H1 (cell line): ENCODE measurements at regions of chr17 and their contacts with region 1.

Region 1: DNA sequence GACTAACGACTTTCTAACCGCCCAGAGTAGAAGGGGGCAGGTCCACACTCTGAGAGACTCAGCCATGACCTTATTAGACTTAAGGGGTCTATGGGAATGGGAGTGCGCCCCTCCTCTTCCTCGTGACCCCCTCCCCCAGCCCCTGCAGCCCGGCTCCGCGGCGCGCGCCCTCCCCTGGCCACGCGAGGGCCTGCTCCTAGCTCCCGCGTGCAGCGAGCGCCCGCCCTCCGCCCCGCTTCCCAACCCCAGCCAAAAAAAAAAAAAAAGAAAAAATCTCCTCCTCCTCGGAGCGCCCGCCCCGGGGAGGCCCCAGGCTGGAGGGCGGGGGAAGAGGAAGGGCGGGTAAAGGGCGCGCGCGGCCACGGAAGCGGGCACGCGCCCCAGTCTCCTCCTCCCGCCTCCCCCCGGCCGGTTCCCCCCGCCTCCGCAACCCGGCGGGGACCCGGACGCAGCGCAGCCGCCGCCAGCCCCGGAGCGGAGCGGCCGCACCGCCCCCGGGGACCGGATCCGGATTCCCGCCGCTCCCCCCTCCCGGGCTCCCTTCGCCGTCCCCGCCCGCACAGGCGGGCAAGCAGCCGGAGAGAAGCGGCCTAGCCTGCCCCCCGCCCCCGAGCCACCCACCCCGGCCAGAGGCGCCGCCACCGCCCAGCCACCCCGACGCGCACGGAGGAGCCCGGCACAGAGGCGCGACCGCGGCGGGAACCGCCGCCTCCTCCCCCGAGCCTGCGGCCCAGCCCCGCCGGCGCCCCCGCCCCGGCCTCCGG is 949 bp downstream of the UBTF start:
- DNase-seq: peak in 1 of 2 experiments; percentile 83
- H3K4me3 ChIP-seq: peak overlapping the region; percentile 67 to 100 (median 84)
- H3K27ac ChIP-seq: peak overlapping the region; percentile 76; the same call in 1 of the 2 replicates
- H3K4me1 ChIP-seq: peaks cover 4 to 21% (median 5%) of the 10 kb centered on the region in 4 experiments; a peak in 6 of 7 replicates
- H3K27me3 ChIP-seq: no peaks in the 10 kb centered on the region
- CTCF ChIP-seq: peak; percentile 18 to 62 (median 57)
- EP300 ChIP-seq: 0 out of 3 replicates have a peak, but pooled peaks of 1 of the 2 experiments have one; percentile 19
- POLR2A ChIP-seq: peak; percentile 16 to 38; a peak in 2 of 3 replicates
- RAD21 ChIP-seq: peak; percentile 8 to 39; a peak in 3 of 4 replicates

Region 2: DNA sequence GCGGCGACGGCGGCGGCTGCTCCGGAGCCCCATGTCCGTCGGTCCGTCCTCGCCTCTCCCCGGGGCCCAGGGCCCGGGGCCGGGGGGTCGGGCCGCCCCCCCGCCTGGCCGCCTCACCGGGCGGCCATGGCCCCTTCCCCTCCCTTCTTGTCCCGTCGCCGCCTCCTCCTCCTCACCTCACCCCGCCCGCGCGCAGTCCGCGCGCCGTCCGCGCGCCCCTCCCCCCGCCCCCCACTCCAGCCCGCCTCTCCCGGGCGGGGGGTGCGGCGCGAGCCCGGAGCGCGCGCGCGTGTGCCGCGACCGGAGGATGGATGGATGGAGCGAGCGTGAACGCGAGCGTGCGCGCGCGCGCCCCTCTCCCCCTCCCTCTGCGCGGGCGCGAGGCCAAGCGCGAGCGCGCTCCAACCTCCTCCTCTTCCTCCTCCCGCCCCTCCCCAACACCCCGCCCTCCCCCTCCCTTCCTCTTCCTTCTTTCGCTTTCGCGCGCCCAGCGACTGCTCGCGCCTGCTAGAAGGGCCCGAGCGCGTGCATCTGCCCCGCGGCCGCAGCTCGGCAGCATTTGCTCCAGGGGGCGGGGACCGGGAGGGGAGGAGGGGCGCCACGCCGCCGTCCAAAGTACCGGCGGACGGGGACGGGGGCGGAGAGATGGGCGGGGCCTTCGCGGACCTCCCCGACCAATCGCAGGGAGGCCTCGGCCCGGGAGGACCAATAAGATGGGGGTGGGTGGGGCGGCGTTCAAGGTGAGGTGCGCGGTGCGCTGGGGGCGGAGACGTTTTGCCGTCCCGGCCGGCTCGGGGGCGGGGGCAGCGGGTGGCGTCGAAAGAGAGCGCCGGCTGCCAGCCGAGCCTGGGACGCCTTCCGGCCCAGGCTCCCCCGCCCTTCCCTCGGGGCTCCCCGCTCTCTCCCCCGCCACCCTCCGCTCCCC is 18.7 kb before region 1 on chr17 and contains the start of gene ATXN7L3:
- CTCF ChIA-PET with region 1: interaction called, 10 read pairs
- POLR2A ChIA-PET with region 1: interaction called, 78 read pairs
- DNase-seq: peak; percentile 92 to 97
- H3K4me3 ChIP-seq: peak within 1 kb of the TSS; percentile 77 to 98 (median 82)
- H3K27ac ChIP-seq: peak within 1 kb of the TSS; percentile 66
- H3K4me1 ChIP-seq: peaks cover 3 to 23% (median 8%) of the 10 kb centered on the region in 4 experiments
- H3K27me3 ChIP-seq: no peaks in the 10 kb centered on the region
- CTCF ChIP-seq: no peak
- EP300 ChIP-seq: no peak
- POLR2A ChIP-seq: peak; percentile 25 to 46; a peak in 2 of 3 replicates
- RAD21 ChIP-seq: no peak
- total RNA-seq, gene ATXN7L3: 103 and 106 TPM in 2 replicates

Region 3: DNA sequence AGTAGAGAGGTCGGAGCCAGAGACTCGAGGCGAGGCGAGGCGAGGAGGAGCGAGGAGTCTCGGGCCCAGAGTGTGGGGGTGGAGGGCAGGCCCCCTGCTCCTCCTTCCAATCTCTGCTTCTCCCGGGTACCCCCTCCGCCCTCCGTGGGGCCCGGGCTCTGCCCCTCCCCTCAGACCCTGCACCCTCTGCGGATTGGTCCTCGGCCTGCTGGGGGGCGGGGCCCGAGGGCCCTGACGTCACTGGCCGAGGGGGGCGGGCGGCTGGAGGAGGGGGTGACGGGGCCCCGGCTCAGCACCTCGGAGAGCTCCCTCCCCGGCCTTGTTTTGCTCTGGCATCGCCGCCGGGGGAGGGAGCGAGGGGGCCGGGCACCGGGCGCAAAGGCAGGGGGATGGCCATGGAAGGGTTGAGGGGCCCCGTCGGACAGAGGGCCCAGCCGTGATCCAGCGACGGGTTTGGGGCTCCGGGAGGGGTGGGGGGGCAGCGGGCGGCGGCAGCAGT is 89.8 kb after region 1 on chr17 and contains the start of gene RUNDC3A:
- CTCF ChIA-PET with region 1: interaction called, 5 read pairs
- POLR2A ChIA-PET with region 1: interaction called, 135 read pairs
- DNase-seq: peak in 1 of 2 experiments; percentile 99
- H3K4me3 ChIP-seq: peak within 1 kb of the TSS; percentile 43 to 67 (median 54)
- H3K27ac ChIP-seq: no peak within 1 kb of the TSS
- H3K4me1 ChIP-seq: peaks cover 7 to 38% (median 26%) of the 10 kb centered on the region in 4 experiments
- H3K27me3 ChIP-seq: no peaks in the 10 kb centered on the region; a peak in 2 of 7 replicates
- CTCF ChIP-seq: no peak
- EP300 ChIP-seq: no peak
- POLR2A ChIP-seq: peak in 1 of 2 experiments; percentile 46; a peak in 1 of 3 replicates
- RAD21 ChIP-seq: no peak
- total RNA-seq, gene RUNDC3A: 6.1 and 6.4 TPM in 2 replicates

Region 4: GRCh38 chr17:44314869-44315661 is 96.5 kb after region 1 on chr17:
- CTCF ChIA-PET with region 1: interaction called, 26 read pairs
- POLR2A ChIA-PET with region 1: interaction called, 135 read pairs
- DNase-seq: peak in 1 of 2 experiments; percentile 81
- H3K4me3 ChIP-seq: peak overlapping the region; percentile 40 to 67 (median 60)
- H3K27ac ChIP-seq: no peak overlapping the region
- H3K4me1 ChIP-seq: peaks cover 7 to 36% (median 29%) of the 10 kb centered on the region in 4 experiments
- H3K27me3 ChIP-seq: peaks cover 0 to 19% (median 17%) of the 10 kb centered on the region in 4 experiments; a peak in 6 of 7 replicates
- CTCF ChIP-seq: no peak
- EP300 ChIP-seq: no peak
- POLR2A ChIP-seq: no peak
- RAD21 ChIP-seq: no peak

Region 5: DNA sequence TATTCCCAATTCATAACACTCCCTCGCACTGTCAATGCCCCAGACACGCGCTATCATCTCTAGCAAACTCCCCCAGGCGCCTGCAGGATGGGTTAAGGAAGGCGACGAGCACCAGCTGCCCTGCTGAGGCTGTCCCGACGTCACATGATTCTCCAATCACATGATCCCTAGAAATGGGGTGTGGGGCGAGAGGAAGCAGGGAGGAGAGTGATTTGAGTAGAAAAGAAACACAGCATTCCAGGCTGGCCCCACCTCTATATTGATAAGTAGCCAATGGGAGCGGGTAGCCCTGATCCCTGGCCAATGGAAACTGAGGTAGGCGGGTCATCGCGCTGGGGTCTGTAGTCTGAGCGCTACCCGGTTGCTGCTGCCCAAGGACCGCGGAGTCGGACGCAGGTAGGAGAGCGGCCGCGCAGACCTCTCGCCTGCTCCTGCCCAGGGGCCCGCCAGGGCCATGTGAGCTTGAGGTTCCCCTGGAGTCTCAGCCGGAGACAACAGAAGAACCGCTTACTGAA is 126.5 kb after region 1 on chr17 and contains the start of gene GRN:
- CTCF ChIA-PET with region 1: interaction called, 10 read pairs
- POLR2A ChIA-PET with region 1: interaction called, 3 read pairs
- DNase-seq: peak; percentile 89 to 92
- H3K4me3 ChIP-seq: peak within 1 kb of the TSS; percentile 52 to 95 (median 78)
- H3K27ac ChIP-seq: 0 out of 2 replicates have a peak within 1 kb of the TSS, but pooled peaks have one; percentile 16
- H3K4me1 ChIP-seq: peaks cover 0 to 2% (median 0%) of the 10 kb centered on the region in 4 experiments; a peak in 3 of 7 replicates
- H3K27me3 ChIP-seq: peaks cover 0 to 3% (median 0%) of the 10 kb centered on the region in 4 experiments; a peak in 3 of 7 replicates
- CTCF ChIP-seq: no peak; a peak in 1 of 4 replicates
- EP300 ChIP-seq: peak in 1 of 2 experiments; percentile 67; a peak in 1 of 3 replicates
- POLR2A ChIP-seq: peak; percentile 76 to 86
- RAD21 ChIP-seq: no peak
- total RNA-seq, gene GRN: 108 and 117 TPM in 2 replicates

Region 6: DNA sequence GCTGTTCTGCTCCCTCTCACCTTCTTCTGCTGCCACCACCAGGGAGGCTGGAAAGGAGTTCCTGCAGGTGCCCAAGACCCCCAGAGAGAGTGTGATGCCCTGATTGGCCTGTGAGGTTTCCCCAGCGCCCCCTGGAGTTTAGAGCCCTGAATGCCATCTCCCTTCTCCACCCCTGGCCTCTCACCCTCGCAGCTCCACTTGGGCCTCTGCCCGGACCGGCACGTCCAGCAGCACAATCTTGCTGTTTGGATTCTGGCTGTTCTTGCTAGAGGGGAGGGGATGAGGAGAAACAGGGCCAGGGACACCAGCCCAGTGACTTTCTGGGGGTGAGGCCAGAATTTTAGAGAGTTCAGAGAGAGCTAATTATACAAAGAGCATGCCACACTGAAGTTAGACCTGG is 157.6 kb after region 1 on chr17:
- CTCF ChIA-PET with region 1: no interaction called
- POLR2A ChIA-PET with region 1: no interaction called
- DNase-seq: peak in 1 of 2 experiments; percentile 87
- H3K4me3 ChIP-seq: no peak overlapping the region
- H3K27ac ChIP-seq: no peak overlapping the region
- H3K4me1 ChIP-seq: peaks cover 4 to 20% (median 14%) of the 10 kb centered on the region in 4 experiments; a peak in 6 of 7 replicates
- H3K27me3 ChIP-seq: no peaks in the 10 kb centered on the region; a peak in 1 of 7 replicates
- CTCF ChIP-seq: peak; percentile 76 to 81 (median 79)
- EP300 ChIP-seq: no peak
- POLR2A ChIP-seq: no peak
- RAD21 ChIP-seq: peak in 1 of 2 experiments; percentile 33; a peak in 2 of 4 replicates

Region 7: DNA sequence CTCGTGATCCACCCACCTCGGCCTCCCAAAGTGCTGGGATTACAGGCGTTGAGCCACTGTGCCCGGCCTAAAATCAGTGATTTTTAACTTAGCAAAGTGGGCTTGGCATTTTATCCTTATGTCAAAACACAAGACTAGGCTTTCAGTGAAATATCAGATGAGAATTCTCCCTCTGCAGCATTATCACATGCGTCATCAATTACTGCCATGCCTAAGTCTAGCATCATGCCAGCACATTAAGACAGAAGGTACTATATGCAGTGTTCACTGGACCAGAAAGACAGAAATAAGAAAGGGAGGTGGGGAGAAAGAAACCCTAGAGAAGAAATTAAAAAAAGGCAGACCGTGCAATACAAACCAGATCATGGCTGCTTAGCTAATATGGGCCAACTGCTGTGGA is 254.8 kb after region 1 on chr17:
- CTCF ChIA-PET with region 1: no interaction called
- POLR2A ChIA-PET with region 1: no interaction called
- DNase-seq: no peak
- H3K4me3 ChIP-seq: no peak overlapping the region
- H3K27ac ChIP-seq: no peak overlapping the region
- H3K4me1 ChIP-seq: no peaks in the 10 kb centered on the region
- H3K27me3 ChIP-seq: no peaks in the 10 kb centered on the region
- CTCF ChIP-seq: no peak
- EP300 ChIP-seq: no peak
- POLR2A ChIP-seq: no peak
- RAD21 ChIP-seq: no peak